Activated CD4-positive, alpha-beta T cell treated with anti-CD3 and anti-CD28 coated beads, Interleukin-2, amount 10 ng/mL, durations not matched to agents 24 days and 14 days (primary cell): ENCODE measurements at regions of chr1 and their contacts with region 1.

Region 1: DNA sequence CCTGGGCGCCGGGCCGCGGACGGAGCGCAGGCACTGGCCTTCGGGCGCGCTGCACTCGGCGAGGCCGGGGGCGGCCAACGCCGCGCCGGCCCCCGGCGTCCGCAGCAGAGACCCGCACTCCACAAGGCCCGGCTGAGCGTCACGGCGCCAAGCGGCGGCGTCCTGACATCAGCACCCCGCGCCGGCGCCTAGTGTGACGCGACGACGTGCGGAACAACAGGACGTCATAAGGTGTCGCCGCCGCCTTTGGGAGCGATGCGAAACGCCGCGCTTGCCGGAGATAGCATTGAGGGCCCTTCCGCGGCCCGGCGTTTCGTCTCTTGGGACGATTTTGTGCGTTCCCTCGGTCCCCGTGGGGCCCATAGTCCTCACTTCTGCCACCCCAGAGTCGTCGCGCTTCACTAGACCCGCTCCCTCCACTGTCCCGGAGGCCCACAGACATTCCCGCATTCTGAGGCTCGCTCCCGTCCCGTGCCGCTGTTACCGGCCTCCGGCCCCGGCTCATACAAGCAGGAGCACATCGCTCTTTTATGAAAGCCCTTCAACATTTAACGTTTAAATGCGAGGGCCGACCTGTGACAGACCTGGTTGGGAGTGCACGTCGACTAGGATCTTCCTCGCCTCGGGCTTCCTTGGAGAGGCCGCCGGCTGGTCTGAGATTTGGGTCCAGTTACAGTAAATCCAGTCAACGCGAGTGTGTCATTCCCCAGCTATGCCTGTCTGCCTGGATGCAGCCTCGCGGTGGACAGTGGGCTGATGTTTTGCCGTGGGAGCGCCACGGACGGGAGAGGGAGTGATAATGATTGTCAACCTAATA is at the start of gene SSU72:
- DNase-seq: peak; percentile 98
- H3K4me3 Mint-ChIP-seq: peak within 1 kb of the TSS; percentile 95
- H3K27ac Mint-ChIP-seq: peak within 1 kb of the TSS; percentile 99
- H3K4me1 Mint-ChIP-seq: peaks cover 23% of the 10 kb centered on the region
- H3K27me3 Mint-ChIP-seq: peaks cover 2% of the 10 kb centered on the region
- total RNA-seq, gene SSU72: 134 TPM in 2 replicates

Region 2: GRCh38 chr1:1471389-1472052 is 103.4 kb before region 1 on chr1 and contains the start of gene ATAD3B:
- intact Hi-C with region 1: loop called (anchors 1 kb)
- DNase-seq: peak; percentile 98
- H3K4me3 Mint-ChIP-seq: peak within 1 kb of the TSS; percentile 90
- H3K27ac Mint-ChIP-seq: peak within 1 kb of the TSS; percentile 82
- H3K4me1 Mint-ChIP-seq: peaks cover 15% of the 10 kb centered on the region
- H3K27me3 Mint-ChIP-seq: no peaks in the 10 kb centered on the region
- total RNA-seq, gene ATAD3B: 98.0 and 98.5 TPM in 2 replicates